Left ventricle myocardium superior (tissue), 1 donor: ENCODE measurements at regions of chr1 and their contacts with region 1.

Region 1: GRCh38 chr1:53182111-53182593 is 14.5 kb upstream of the CPT2 start:
- DNase-seq: peak; percentile 88
- ATAC-seq: peak; percentile 70

Region 2: GRCh38 chr1:52904927-52905698 is 277.0 kb before region 1 on chr1:
- intact Hi-C with region 1: loop called (anchors 10 kb)
- DNase-seq: peak; percentile 55
- ATAC-seq: peak; percentile 94